Activated CD4-positive, alpha-beta memory T cell treated with anti-CD3 and anti-CD28 coated beads, Interleukin-2, amount 10 ng/mL, durations not matched to agents 7 days and 5 days (primary cell): ENCODE measurements at regions of chr2 and their contacts with region 1.

Region 1: GRCh38 chr2:203718087-203718486 is 11.6 kb downstream of the CD28 start:
- DNase-seq: peak; percentile 80
- H3K4me3 Mint-ChIP-seq: peak overlapping the region; percentile 50
- H3K27ac Mint-ChIP-seq: peak overlapping the region; percentile 93
- H3K4me1 Mint-ChIP-seq: peaks cover 99% of the 10 kb centered on the region
- H3K27me3 Mint-ChIP-seq: no peaks in the 10 kb centered on the region

Region 2: GRCh38 chr2:203706403-203706802 is 11.7 kb before region 1 on chr2 and contains the start of gene CD28:
- CTCF ChIA-PET with region 1: interaction called, 62 read pairs
- POLR2A ChIA-PET with region 1: interaction called, 446 read pairs
- DNase-seq: peak; percentile 95
- H3K4me3 Mint-ChIP-seq: peak within 1 kb of the TSS; percentile 90
- H3K27ac Mint-ChIP-seq: peak within 1 kb of the TSS; percentile 97
- H3K4me1 Mint-ChIP-seq: peaks cover 46% of the 10 kb centered on the region
- H3K27me3 Mint-ChIP-seq: no peaks in the 10 kb centered on the region
- total RNA-seq, gene CD28: 194 to 205 TPM

Region 3: DNA sequence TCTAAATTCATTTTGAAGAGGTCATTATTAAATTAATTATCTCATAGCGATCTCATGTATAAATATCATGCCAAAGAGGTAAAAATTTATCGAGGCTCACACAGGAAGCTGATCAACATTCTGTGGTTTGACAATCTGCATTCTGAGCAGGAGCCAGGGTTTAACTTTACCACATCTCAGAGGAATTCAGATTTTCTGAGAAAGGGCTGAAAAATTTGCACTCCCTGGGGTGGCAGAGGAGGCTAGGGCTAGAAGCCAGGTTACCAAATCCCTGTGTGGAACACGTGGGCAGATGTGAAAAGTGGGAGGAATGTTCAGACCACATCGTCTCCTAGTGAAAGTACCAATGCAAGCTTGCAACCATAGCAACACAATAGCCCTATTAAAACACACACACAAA is 86.0 kb after region 1 on chr2:
- CTCF ChIA-PET with region 1: no interaction called
- POLR2A ChIA-PET with region 1: interaction called, 14 read pairs
- DNase-seq: peak; percentile 38
- H3K4me3 Mint-ChIP-seq: no peak overlapping the region
- H3K27ac Mint-ChIP-seq: peak overlapping the region; percentile 38
- H3K4me1 Mint-ChIP-seq: peaks cover 68% of the 10 kb centered on the region
- H3K27me3 Mint-ChIP-seq: no peaks in the 10 kb centered on the region